ENCODE measurements at regions of chr6 and their contacts with region 1.

Region 1: GRCh38 chr6:347232-347631 is 44.3 kb upstream of the IRF4 start:
- DNase-seq: no peak
- ATAC-seq: peak; percentile 68
- H3K4me3 ChIP-seq: peak overlapping the region; percentile 24; the same call in 1 of the 2 replicates
- H3K27ac ChIP-seq: peak overlapping the region; percentile 84
- H3K4me1 ChIP-seq: peaks cover 64% of the 10 kb centered on the region
- H3K27me3 ChIP-seq: no peaks in the 10 kb centered on the region
- CTCF ChIP-seq: peak in 1 of 3 experiments; percentile 9; a peak in 1 of 6 replicates
- EP300 ChIP-seq: no peak; a peak in 1 of 4 replicates
- POLR2A ChIP-seq: no peak
- RAD21 ChIP-seq: peak; percentile 58

Region 2: DNA sequence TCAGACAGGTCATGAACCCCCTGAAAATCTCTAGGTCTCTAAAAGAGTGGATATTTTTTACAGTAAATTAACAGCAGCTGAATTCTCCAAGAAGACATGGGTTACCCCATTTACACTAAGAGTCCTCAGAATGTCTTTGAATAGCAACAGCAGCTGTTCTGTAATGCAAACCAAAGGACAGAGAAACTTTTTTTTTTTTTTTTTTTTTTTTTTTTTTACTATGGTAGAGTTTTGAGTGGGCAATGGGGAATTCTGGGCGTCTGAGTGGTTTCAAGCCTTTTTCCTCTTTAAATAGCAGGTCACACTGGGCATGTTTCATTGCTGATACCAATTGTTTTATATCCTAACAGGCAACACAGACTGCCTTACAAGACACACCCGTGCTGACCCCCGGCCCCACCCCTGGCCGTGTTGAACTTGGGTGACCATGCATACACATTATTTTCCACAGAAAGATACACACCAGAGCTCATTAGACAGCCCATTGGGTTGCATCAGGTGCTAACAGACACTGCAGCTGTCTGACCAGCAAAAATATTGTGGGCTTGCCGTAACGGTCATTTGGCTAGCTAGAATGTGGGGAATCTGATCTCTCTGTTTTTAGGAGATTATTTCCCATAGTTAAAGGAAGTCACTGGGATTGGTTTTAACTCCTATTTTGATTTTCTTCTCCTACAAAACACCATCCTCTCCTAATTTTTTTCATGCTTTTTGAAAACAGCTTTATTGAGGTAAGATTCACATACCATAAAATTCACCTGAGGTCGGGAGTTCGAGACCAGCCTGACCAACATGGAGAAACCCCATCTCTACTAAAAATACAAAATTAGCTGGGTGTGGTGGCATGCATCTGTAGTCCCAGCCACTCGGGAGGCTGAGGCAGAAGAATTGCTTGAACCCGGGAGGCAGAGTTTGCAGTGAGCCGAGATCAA is 17.6 kb after region 1 on chr6:
- CTCF ChIA-PET with region 1: interaction called, 34 read pairs
- POLR2A ChIA-PET with region 1: interaction called, 10 read pairs
- RAD21 ChIA-PET with region 1: interaction called, 73 read pairs
- SMC1A ChIA-PET with region 1: interaction called, 230 read pairs
- in situ Hi-C with region 1: no loop called
- intact Hi-C with region 1: no loop called
- DNase-seq: peak; percentile 78
- ATAC-seq: peak; percentile 94
- H3K4me3 ChIP-seq: no peak overlapping the region
- H3K27ac ChIP-seq: peak overlapping the region; percentile 33
- H3K4me1 ChIP-seq: peaks cover 25% of the 10 kb centered on the region
- H3K27me3 ChIP-seq: no peaks in the 10 kb centered on the region
- CTCF ChIP-seq: no peak
- EP300 ChIP-seq: peak; percentile 37 to 88; a peak in 2 of 4 replicates
- POLR2A ChIP-seq: no peak
- RAD21 ChIP-seq: 0 out of 2 replicates have a peak, but pooled peaks have one; percentile 2

Measured in GM12878 (cell line).